Tibial artery (tissue), 4 donors: ENCODE measurements at regions of chr3 and their contacts with region 1.

Region 1: GRCh38 chr3:38479431-38480092 is 16.6 kb upstream of the EXOG start:
- DNase-seq: peak; percentile 63 to 79
- H3K4me3 ChIP-seq: no peak overlapping the region
- H3K27ac ChIP-seq: no peak overlapping the region
- H3K4me1 ChIP-seq: no peaks in the 10 kb centered on the region
- H3K27me3 ChIP-seq: no peaks in the 10 kb centered on the region
- CTCF ChIP-seq: peak; percentile 71 to 85

Region 2: GRCh38 chr3:38117748-38118420 is 361.7 kb before region 1 on chr3:
- intact Hi-C with region 1: loop called (anchors 5 kb)
- DNase-seq: peak; percentile 69 to 74
- H3K4me3 ChIP-seq: no peak overlapping the region
- H3K27ac ChIP-seq: no peak overlapping the region
- H3K4me1 ChIP-seq: peaks cover 0 to 6% (median 0%) of the 10 kb centered on the region in 4 donors
- H3K27me3 ChIP-seq: no peaks in the 10 kb centered on the region
- CTCF ChIP-seq: peak; percentile 68 to 70

Region 3: GRCh38 chr3:38346587-38347410 is 132.8 kb before region 1 on chr3 and contains the start of gene XYLB:
- intact Hi-C with region 1: loop called (anchors 2 kb)
- DNase-seq: peak; percentile 82 to 90
- H3K4me3 ChIP-seq: peak within 1 kb of the TSS; percentile 62 to 63
- H3K27ac ChIP-seq: peak within 1 kb of the TSS; percentile 43 to 53
- H3K4me1 ChIP-seq: peaks cover 0 to 13% (median 7%) of the 10 kb centered on the region in 4 donors
- H3K27me3 ChIP-seq: no peaks in the 10 kb centered on the region
- CTCF ChIP-seq: peak; percentile 87 to 92

Region 4: GRCh38 chr3:38368238-38368637 is 111.3 kb before region 1 on chr3:
- intact Hi-C with region 1: no loop called
- DNase-seq: no peak
- H3K4me3 ChIP-seq: no peak overlapping the region
- H3K27ac ChIP-seq: no peak overlapping the region
- H3K4me1 ChIP-seq: no peaks in the 10 kb centered on the region
- H3K27me3 ChIP-seq: no peaks in the 10 kb centered on the region
- CTCF ChIP-seq: no peak